GM12878 (cell line): ENCODE measurements at regions of chr6 and their contacts with region 1.

Region 1: DNA sequence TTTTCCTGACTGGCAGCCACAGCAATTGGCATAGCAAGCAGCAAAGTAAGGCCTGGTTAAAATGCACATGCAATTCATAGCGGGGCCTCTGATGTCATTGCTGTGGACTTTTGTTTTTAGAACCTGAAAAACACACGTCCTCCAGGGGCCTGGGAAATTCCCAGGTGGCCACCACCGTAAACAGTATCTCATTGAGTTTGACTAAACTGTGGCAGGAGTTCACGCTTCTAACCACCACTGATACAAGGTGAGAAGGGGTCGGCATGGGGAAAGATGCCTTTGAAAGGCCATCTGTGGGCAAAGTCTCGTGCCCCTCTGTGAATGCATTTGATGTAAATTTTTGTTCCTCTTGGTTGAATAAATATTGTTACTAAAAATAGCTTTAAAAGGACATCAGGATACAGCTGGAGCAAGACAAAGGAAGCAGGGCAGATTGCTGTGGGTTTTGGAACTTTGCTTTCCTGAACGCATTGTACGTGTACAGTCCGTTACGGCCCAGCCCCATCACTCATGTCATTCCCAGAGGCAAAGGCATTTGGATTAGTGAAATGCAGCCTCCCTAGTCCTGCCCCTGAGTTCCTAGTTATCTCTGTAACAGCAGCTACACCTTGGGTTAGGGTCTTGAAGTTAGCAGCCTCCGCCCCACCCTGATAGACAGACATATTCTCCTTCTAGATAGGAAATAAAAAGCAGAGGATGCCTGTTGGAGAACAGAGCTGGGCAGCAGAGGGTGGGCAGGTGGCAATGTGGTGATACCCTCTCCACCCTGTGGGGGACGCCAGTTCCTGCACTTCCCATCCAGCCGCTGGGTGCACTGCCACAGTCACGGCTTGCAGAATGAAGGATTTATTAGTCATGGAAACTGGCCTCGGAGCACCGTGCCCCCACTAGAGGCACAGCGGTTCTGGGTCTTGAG is 80.3 kb downstream of the ZDHHC14 start:
- DNase-seq: peak; percentile 92
- ATAC-seq: peak; percentile 69
- H3K4me3 ChIP-seq: no peak overlapping the region
- H3K27ac ChIP-seq: peak overlapping the region; percentile 44; the same call in 1 of the 2 replicates
- H3K4me1 ChIP-seq: peaks cover 40% of the 10 kb centered on the region
- H3K27me3 ChIP-seq: no peaks in the 10 kb centered on the region
- CTCF ChIP-seq: peak; percentile 41 to 58 (median 46); a peak in 5 of 6 replicates
- EP300 ChIP-seq: peak; percentile 97 to 98
- POLR2A ChIP-seq: no peak
- RAD21 ChIP-seq: peak; percentile 15; the same call in 1 of the 2 replicates

Region 2: GRCh38 chr6:157339432-157339831 is 121.8 kb before region 1 on chr6:
- CTCF ChIA-PET with region 1: interaction called, 10 read pairs
- POLR2A ChIA-PET with region 1: no interaction called
- RAD21 ChIA-PET with region 1: interaction called, 4 read pairs
- SMC1A ChIA-PET with region 1: interaction called, 8 read pairs
- in situ Hi-C with region 1: no loop called
- intact Hi-C with region 1: no loop called
- DNase-seq: no peak
- ATAC-seq: peak; percentile 64
- H3K4me3 ChIP-seq: no peak overlapping the region
- H3K27ac ChIP-seq: no peak overlapping the region
- H3K4me1 ChIP-seq: no peaks in the 10 kb centered on the region
- H3K27me3 ChIP-seq: peaks cover 0 to 2% of the 10 kb centered on the region in 2 experiments; a peak in 1 of 4 replicates
- CTCF ChIP-seq: peak; percentile 14 to 48 (median 20); a peak in 3 of 6 replicates
- EP300 ChIP-seq: no peak
- POLR2A ChIP-seq: no peak
- RAD21 ChIP-seq: peak; percentile 20; the same call in 1 of the 2 replicates

Region 3: GRCh38 chr6:157385482-157385881 is 75.8 kb before region 1 on chr6:
- CTCF ChIA-PET with region 1: interaction called, 26 read pairs
- POLR2A ChIA-PET with region 1: interaction called, 58 read pairs
- RAD21 ChIA-PET with region 1: interaction called, 100 read pairs
- SMC1A ChIA-PET with region 1: interaction called, 81 read pairs
- in situ Hi-C with region 1: no loop called
- intact Hi-C with region 1: loop called (anchors 1 kb)
- DNase-seq: peak; percentile 44
- ATAC-seq: peak; percentile 45
- H3K4me3 ChIP-seq: no peak overlapping the region
- H3K27ac ChIP-seq: no peak overlapping the region
- H3K4me1 ChIP-seq: no peaks in the 10 kb centered on the region
- H3K27me3 ChIP-seq: peaks cover 0 to 4% of the 10 kb centered on the region in 2 experiments; a peak in 1 of 4 replicates
- CTCF ChIP-seq: no peak
- EP300 ChIP-seq: peak; percentile 48 to 52; a peak in 2 of 4 replicates
- POLR2A ChIP-seq: no peak
- RAD21 ChIP-seq: no peak

Region 4: GRCh38 chr6:157535339-157536222 is 74.3 kb after region 1 on chr6:
- CTCF ChIA-PET with region 1: interaction called, 40 read pairs
- POLR2A ChIA-PET with region 1: interaction called, 3 read pairs
- RAD21 ChIA-PET with region 1: interaction called, 54 read pairs
- SMC1A ChIA-PET with region 1: interaction called, 71 read pairs
- in situ Hi-C with region 1: no loop called
- intact Hi-C with region 1: loop called (anchors 1 kb)
- DNase-seq: peak; percentile 71
- ATAC-seq: peak; percentile 85
- H3K4me3 ChIP-seq: no peak overlapping the region
- H3K27ac ChIP-seq: no peak overlapping the region; the same call in 1 of the 2 replicates
- H3K4me1 ChIP-seq: peaks cover 8% of the 10 kb centered on the region; the same call in 1 of the 2 replicates
- H3K27me3 ChIP-seq: no peaks in the 10 kb centered on the region
- CTCF ChIP-seq: no peak
- EP300 ChIP-seq: peak; percentile 85 to 91; a peak in 3 of 4 replicates
- POLR2A ChIP-seq: no peak
- RAD21 ChIP-seq: no peak

Region 5: DNA sequence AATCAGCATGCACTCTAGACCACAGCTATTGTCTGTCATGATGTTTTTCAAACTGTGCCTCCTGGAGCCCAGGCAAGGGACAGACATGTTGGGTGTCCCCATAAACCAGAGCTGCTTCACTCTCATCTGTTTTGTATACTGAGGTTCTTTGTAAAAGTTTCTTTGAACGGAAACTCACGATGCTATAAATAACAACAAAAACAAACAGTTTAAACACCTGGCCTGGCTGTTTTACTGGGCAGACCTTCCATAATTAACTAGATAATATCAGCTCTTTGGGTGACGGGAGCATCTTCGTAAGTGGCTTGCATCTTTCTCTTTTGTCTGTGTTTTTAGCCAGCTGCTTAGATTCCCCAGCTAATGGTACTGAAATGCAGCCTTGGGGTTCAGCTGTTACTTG is 110.0 kb after region 1 on chr6:
- CTCF ChIA-PET with region 1: interaction called, 42 read pairs
- POLR2A ChIA-PET with region 1: interaction called, 30 read pairs
- RAD21 ChIA-PET with region 1: interaction called, 116 read pairs
- SMC1A ChIA-PET with region 1: interaction called, 431 read pairs
- in situ Hi-C with region 1: no loop called
- intact Hi-C with region 1: no loop called
- DNase-seq: peak; percentile 68
- ATAC-seq: peak; percentile 69
- H3K4me3 ChIP-seq: no peak overlapping the region
- H3K27ac ChIP-seq: peak overlapping the region; percentile 60
- H3K4me1 ChIP-seq: peaks cover 22% of the 10 kb centered on the region
- H3K27me3 ChIP-seq: no peaks in the 10 kb centered on the region
- CTCF ChIP-seq: 0 out of 6 replicates have a peak, but pooled peaks of 1 of the 3 experiments have one; percentile 9
- EP300 ChIP-seq: peak; percentile 16 to 84; a peak in 1 of 4 replicates
- POLR2A ChIP-seq: no peak
- RAD21 ChIP-seq: no peak

Region 6: DNA sequence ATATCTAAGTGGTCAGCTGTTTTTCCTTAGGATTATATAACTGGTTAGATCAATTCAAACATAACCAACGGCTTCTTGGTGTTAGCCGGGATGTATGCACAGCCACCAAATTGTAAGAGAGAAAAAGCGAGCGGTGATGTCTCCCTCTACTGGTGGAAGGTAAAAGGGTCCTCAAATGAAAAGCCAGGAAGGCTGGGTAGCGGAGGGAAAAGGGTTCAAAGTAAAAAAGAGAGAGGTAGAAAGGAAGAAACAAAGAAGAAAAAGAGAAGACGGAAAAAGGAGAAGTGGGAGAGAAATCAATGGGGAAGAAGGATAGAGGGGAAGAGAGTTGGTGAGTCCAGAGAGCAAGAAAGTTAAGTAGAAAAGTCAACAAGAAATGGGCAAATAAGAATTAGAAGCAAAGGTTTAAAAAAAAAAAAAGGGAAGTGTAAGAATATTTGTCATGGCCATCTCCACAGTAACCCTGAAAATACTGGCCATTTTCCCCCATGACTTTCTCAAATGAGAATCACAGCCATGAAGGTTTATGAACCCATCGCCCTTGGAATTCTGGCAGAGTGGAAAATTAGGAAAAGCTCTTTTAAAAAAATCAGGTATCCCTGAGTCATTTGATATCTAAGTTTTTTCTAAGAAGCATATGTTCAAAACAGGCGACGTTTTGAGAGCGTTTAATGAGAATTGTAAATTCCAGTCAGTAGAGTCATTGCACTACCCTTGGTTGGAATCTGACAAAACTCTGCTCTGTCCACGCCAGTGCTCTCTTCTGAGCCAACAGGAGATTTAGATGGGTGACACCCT is 206.2 kb after region 1 on chr6:
- CTCF ChIA-PET with region 1: interaction called, 56 read pairs
- POLR2A ChIA-PET with region 1: no interaction called
- RAD21 ChIA-PET with region 1: interaction called, 35 read pairs
- SMC1A ChIA-PET with region 1: interaction called, 67 read pairs
- in situ Hi-C with region 1: no loop called
- intact Hi-C with region 1: loop called (anchors 2 kb)
- DNase-seq: peak; percentile 36
- ATAC-seq: peak; percentile 94
- H3K4me3 ChIP-seq: no peak overlapping the region
- H3K27ac ChIP-seq: no peak overlapping the region
- H3K4me1 ChIP-seq: no peaks in the 10 kb centered on the region
- H3K27me3 ChIP-seq: 0 out of 4 replicates have a peak, but pooled peaks cover 0 to 2% of the 10 kb centered on the region in 2 experiments
- CTCF ChIP-seq: peak; percentile 74 to 81 (median 79)
- EP300 ChIP-seq: no peak
- POLR2A ChIP-seq: no peak
- RAD21 ChIP-seq: peak; percentile 95